ENCODE measurements at regions of chr12 and their contacts with region 1.

Region 1: DNA sequence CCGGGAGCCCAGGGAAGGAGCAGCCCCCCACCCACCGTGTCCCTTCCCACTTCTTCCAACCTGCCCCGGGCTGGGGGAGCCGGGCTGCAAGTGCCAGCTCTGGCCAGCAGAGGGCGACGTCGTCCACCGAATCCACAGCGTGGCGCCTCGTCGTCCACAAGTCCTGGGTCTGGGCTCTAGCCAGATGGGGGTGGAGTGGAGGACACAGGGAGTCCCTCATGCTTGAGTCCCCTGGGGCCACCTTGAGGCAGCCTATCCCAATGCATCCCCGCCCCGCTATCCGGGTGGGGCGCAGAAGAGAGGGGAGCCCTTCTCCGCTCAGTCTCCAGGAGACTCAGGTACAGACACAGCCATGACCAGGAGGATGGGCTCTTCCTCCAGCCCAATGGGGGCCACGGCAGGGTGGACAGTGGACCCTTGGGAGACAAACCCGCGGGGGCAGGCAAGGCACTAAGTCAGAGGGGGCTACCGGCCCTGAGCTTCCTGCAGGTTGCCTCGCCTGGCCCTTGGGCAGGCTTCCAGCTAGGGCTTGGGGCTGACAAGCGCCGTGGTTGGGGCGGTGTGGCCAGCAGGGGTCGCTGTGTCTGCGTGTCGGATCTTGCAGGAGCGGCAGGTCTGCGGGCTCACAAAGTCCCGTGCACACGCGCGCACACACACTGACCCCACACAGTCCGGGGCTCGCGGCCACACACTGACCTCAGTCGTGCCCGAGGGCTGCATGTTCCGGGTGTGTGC is 5.5 kb downstream of the AQP5 start:
- DNase-seq: peak; percentile 92 to 96 (median 94)
- ATAC-seq: peak; percentile 90
- H3K4me3 ChIP-seq: peak overlapping the region; percentile 49
- H3K27ac ChIP-seq: peak overlapping the region; percentile 29; the same call in 1 of the 3 replicates
- H3K4me1 ChIP-seq: peaks cover 12 to 26% of the 10 kb centered on the region in 2 experiments; a peak in 4 of 5 replicates
- H3K27me3 ChIP-seq: peaks cover 28 to 70% of the 10 kb centered on the region in 2 experiments; a peak in 4 of 5 replicates
- CTCF ChIP-seq: peak; percentile 83 to 97 (median 94)
- EP300 ChIP-seq: no peak
- POLR2A ChIP-seq: no peak
- RAD21 ChIP-seq: peak; percentile 87 to 93

Region 2: DNA sequence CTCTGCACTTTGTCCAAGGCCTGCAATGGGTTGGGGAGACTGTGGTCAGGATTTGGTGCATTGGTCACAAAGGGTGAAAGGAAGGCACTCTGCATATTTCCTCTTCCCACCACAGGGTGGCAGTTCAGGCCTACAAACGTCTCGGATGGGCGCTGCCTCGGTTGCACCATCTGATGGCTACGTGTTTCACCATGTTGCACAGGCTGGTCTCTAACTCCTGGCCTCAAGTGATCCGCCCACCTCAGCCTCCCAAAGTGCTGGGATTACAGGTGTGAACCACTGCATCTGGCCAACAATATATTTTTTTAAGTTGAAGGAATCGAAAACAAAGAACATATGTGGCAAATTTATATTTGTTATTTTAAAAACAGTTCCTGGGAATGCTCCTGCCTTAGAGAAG is 190.8 kb before region 1 on chr12:
- CTCF ChIA-PET with region 1: interaction called, 11 read pairs
- POLR2A ChIA-PET with region 1: no interaction called
- in situ Hi-C with region 1: no loop called
- intact Hi-C with region 1: loop called (anchors 1 kb)
- DNase-seq: peak; percentile 70 to 78 (median 72)
- ATAC-seq: peak; percentile 93
- H3K4me3 ChIP-seq: no peak overlapping the region
- H3K27ac ChIP-seq: no peak overlapping the region; the same call in 2 of the 3 replicates
- H3K4me1 ChIP-seq: peaks cover 0 to 6% of the 10 kb centered on the region in 2 experiments; a peak in 2 of 5 replicates
- H3K27me3 ChIP-seq: no peaks in the 10 kb centered on the region
- CTCF ChIP-seq: peak; percentile 85 to 93 (median 92)
- EP300 ChIP-seq: no peak
- POLR2A ChIP-seq: no peak
- RAD21 ChIP-seq: peak; percentile 93 to 95

Region 3: DNA sequence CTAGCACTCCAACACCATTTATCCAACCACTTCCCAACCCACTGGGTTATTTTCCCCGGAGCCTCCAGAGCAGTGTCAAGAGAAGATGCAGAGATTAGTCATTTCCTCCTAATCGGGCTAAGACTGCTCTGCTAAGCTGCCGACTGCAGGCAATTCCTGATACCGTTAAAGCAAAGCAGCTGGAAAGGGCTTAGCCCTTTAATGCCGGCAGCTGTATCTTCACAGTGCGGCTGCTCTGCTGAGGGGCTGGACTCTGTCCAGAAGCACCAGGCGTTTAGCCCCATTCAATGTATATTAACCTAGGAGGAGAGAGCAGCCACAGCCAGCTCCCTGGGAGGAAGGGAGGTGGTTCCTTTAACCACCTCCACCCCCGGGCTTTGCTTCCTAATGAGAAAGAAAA is 16.7 kb after region 1 on chr12:
- CTCF ChIA-PET with region 1: interaction called, 5 read pairs
- POLR2A ChIA-PET with region 1: interaction called, 11 read pairs
- in situ Hi-C with region 1: no loop called
- intact Hi-C with region 1: no loop called
- DNase-seq: peak in 3 of 4 experiments; percentile 30 to 80 (median 65)
- ATAC-seq: peak; percentile 88
- H3K4me3 ChIP-seq: no peak overlapping the region
- H3K27ac ChIP-seq: no peak overlapping the region
- H3K4me1 ChIP-seq: peaks cover 26% of the 10 kb centered on the region in 2 experiments
- H3K27me3 ChIP-seq: no peaks in the 10 kb centered on the region
- CTCF ChIP-seq: 0 out of 6 replicates have a peak, but pooled peaks of 1 of the 3 experiments have one; percentile 11
- EP300 ChIP-seq: no peak; the same call in 1 of the 2 replicates
- POLR2A ChIP-seq: no peak
- RAD21 ChIP-seq: 0 out of 4 replicates have a peak, but pooled peaks of 1 of the 2 experiments have one; percentile 20

Region 4: GRCh38 chr12:50074936-50075807 is 108.0 kb after region 1 on chr12:
- CTCF ChIA-PET with region 1: interaction called, 43 read pairs
- POLR2A ChIA-PET with region 1: interaction called, 4 read pairs
- in situ Hi-C with region 1: no loop called
- intact Hi-C with region 1: loop called (anchors 1 kb)
- DNase-seq: peak; percentile 82 to 89 (median 82)
- ATAC-seq: peak; percentile 94
- H3K4me3 ChIP-seq: no peak overlapping the region
- H3K27ac ChIP-seq: no peak overlapping the region
- H3K4me1 ChIP-seq: peaks cover 23 to 24% of the 10 kb centered on the region in 2 experiments; a peak in 4 of 5 replicates
- H3K27me3 ChIP-seq: no peaks in the 10 kb centered on the region
- CTCF ChIP-seq: peak; percentile 90 to 95 (median 94)
- EP300 ChIP-seq: no peak
- POLR2A ChIP-seq: no peak
- RAD21 ChIP-seq: peak; percentile 91 to 97

Region 5: GRCh38 chr12:50174971-50175715 is 207.9 kb after region 1 on chr12:
- CTCF ChIA-PET with region 1: interaction called, 28 read pairs
- POLR2A ChIA-PET with region 1: no interaction called
- in situ Hi-C with region 1: no loop called
- intact Hi-C with region 1: loop called (anchors 2 kb)
- DNase-seq: peak; percentile 51 to 82 (median 54)
- ATAC-seq: peak; percentile 64
- H3K4me3 ChIP-seq: no peak overlapping the region
- H3K27ac ChIP-seq: no peak overlapping the region
- H3K4me1 ChIP-seq: no peaks in the 10 kb centered on the region
- H3K27me3 ChIP-seq: no peaks in the 10 kb centered on the region
- CTCF ChIP-seq: peak; percentile 52 to 87 (median 54); a peak in 5 of 6 replicates
- EP300 ChIP-seq: no peak
- POLR2A ChIP-seq: no peak
- RAD21 ChIP-seq: peak; percentile 92 to 94